ENCODE measurements at regions of chr5 and their contacts with region 1.

Region 1: DNA sequence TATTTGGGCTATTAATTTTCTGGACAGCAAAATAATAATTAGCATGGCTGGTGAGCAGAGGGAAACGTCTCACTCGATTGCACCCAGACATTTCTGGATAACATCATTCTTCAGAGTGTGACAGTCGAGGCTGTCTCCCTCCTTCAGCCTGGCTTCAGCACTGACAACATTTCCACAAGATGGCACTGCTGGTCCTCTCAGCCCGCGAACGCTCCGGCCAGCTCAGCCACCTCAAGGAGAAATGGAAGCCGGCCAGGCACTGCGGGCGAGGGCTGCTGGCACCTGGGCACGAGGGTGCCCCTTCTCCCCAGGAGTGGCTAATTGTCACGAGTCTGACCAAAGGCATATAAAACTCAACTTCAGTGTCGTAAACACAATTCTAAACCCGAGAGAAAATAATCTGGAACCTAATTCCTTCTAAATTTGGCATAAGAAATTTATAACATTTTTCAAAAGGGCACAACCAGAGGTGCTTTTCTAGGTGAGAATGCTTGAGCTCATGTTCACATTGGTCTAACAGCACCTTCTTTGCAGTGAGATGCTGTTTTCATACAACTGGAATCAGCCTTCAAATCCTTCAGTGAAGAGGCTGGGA is 65.9 kb downstream of the DAP start:
- DNase-seq: peak; percentile 53 to 77
- ATAC-seq: peak; percentile 97

Region 2: GRCh38 chr5:10863763-10864383 is 168.7 kb after region 1 on chr5:
- intact Hi-C with region 1: loop called in 1 of 2 experiments (anchors 10 kb)
- DNase-seq: peak in 1 of 2 donors; percentile 59
- ATAC-seq: peak; percentile 67

Measured in left colon (tissue), 2 donors.